Naive thymus-derived CD4-positive, alpha-beta T cell (primary cell): ENCODE measurements at regions of chr5 and their contacts with region 1.

Region 1: GRCh38 chr5:96963267-96963666 is 27.4 kb downstream of the LNPEP start:
- DNase-seq: no peak
- ATAC-seq: peak; percentile 39
- H3K4me3 ChIP-seq: peak overlapping the region; percentile 6
- H3K4me3 Mint-ChIP-seq: peak overlapping the region; percentile 71 to 88 (median 82)
- H3K27ac ChIP-seq: peak overlapping the region; percentile 71
- H3K27ac Mint-ChIP-seq: peak overlapping the region; percentile 84 to 98 (median 95)
- H3K4me1 ChIP-seq: peaks cover 29 to 52% of the 10 kb centered on the region in 2 donors
- H3K4me1 Mint-ChIP-seq: peaks cover 31 to 96% (median 90%) of the 10 kb centered on the region in 7 donors
- H3K27me3 ChIP-seq: no peaks in the 10 kb centered on the region
- H3K27me3 Mint-ChIP-seq: no peaks in the 10 kb centered on the region

Region 2: DNA sequence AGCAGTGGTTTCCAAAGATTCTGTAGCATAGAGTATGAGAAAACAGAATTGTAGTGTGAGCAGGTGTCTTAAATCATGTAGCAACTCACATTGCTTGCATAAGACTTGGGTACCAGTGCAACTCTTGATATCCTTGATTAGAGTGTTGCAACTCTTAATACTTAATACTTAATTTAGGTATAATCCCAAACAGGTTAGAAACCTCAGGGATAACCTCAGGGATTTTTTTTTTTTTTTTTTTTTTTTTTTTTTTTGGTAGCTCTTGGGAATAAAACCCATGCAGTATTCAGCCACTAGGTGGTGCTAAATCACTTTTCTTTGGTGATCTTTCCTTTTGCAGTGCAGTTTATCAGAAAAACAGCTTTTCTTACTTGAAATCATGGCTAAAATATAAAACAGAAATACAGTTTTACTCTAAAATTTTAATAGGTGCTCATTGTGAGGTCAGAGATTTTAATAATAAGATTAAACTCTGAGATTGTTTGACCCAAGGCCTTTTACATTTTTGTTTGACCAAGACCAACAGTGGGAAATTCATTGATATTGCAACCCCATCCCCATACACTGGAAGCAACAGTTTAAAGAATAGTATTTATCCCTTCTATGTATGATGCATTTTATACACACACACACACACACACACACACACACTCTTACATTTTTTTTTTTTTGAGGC is 210.8 kb before region 1 on chr5:
- CTCF ChIA-PET with region 1: no interaction called
- POLR2A ChIA-PET with region 1: no interaction called
- intact Hi-C with region 1: no loop called
- DNase-seq: peak in 7 of 9 donors; percentile 46 to 72 (median 60)
- ATAC-seq: peak; percentile 70
- H3K4me3 ChIP-seq: no peak overlapping the region
- H3K4me3 Mint-ChIP-seq: no peak overlapping the region
- H3K27ac ChIP-seq: no peak overlapping the region
- H3K27ac Mint-ChIP-seq: peak overlapping the region in 6 of 9 donors; percentile 36 to 67 (median 56)
- H3K4me1 ChIP-seq: no peaks in the 10 kb centered on the region
- H3K4me1 Mint-ChIP-seq: peaks cover 0 to 8% (median 0%) of the 10 kb centered on the region in 7 donors
- H3K27me3 ChIP-seq: no peaks in the 10 kb centered on the region
- H3K27me3 Mint-ChIP-seq: no peaks in the 10 kb centered on the region

Region 3: DNA sequence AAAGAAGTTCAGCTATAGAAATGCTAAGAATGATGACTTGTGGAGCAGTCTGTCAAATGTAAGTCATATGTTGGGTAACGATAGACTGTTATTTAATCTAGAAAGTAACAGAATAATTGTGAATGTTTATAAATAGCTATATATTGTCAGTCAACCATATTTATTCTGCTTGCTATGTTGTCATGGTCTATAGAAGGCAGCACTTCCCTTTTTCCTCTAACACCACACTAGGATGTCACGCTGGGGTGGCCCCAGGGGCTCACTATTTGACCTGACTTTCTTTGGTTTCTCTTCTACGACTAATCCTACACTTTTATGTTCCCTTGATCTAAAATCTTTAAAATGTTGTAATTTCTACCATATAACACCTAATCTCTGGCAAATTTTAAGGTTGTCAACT is 66.5 kb before region 1 on chr5:
- CTCF ChIA-PET with region 1: interaction called, 6 read pairs
- POLR2A ChIA-PET with region 1: interaction called, 3 read pairs
- intact Hi-C with region 1: loop called (anchors 2 kb)
- DNase-seq: no peak
- ATAC-seq: peak; percentile 73
- H3K4me3 ChIP-seq: peak overlapping the region; percentile 36
- H3K4me3 Mint-ChIP-seq: peak overlapping the region; percentile 67 to 88 (median 79)
- H3K27ac ChIP-seq: peak overlapping the region; percentile 69
- H3K27ac Mint-ChIP-seq: peak overlapping the region; percentile 83 to 98 (median 94)
- H3K4me1 ChIP-seq: peaks cover 6 to 17% of the 10 kb centered on the region in 2 donors
- H3K4me1 Mint-ChIP-seq: peaks cover 26 to 71% (median 68%) of the 10 kb centered on the region in 7 donors
- H3K27me3 ChIP-seq: no peaks in the 10 kb centered on the region
- H3K27me3 Mint-ChIP-seq: no peaks in the 10 kb centered on the region

Region 4: DNA sequence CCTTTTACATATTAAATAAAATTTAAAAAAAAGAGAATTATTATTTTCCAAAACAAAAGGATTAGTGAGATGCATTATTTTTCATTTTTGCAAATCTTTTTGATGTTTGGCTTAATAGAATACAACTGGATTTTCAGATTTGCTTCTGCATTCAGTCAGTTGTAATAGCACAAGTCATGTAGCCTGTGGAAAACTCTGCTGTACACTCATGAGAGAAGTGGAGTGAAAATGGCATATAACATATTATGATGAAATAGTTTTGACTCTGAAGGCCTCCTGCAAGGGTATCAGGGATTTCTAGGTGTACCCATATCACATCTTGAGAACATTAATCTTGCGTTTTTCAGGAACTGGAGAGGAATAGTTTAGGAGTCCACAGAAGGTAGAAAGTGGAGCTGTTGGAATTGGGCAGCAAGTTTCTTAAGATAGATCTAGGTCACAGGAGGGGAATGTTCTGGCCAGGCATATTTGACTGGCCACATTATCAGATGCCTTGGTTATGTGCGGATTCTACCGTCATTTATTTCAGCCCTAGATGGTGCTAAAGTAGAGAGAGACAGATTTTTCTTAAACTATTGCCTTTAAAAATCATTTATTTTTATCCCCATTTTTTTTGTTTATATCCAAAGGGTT is 11.0 kb before region 1 on chr5:
- CTCF ChIA-PET with region 1: interaction called, 5 read pairs
- POLR2A ChIA-PET with region 1: interaction called, 6 read pairs
- intact Hi-C with region 1: loop called (anchors 1 kb)
- DNase-seq: no peak
- ATAC-seq: no peak
- H3K4me3 ChIP-seq: no peak overlapping the region
- H3K4me3 Mint-ChIP-seq: peak overlapping the region in 6 of 10 donors; percentile 22 to 56 (median 40)
- H3K27ac ChIP-seq: no peak overlapping the region
- H3K27ac Mint-ChIP-seq: peak overlapping the region in 8 of 9 donors; percentile 72 to 91 (median 80)
- H3K4me1 ChIP-seq: peaks cover 29 to 39% of the 10 kb centered on the region in 2 donors
- H3K4me1 Mint-ChIP-seq: peaks cover 54 to 93% (median 83%) of the 10 kb centered on the region in 7 donors
- H3K27me3 ChIP-seq: no peaks in the 10 kb centered on the region
- H3K27me3 Mint-ChIP-seq: no peaks in the 10 kb centered on the region

Region 5: DNA sequence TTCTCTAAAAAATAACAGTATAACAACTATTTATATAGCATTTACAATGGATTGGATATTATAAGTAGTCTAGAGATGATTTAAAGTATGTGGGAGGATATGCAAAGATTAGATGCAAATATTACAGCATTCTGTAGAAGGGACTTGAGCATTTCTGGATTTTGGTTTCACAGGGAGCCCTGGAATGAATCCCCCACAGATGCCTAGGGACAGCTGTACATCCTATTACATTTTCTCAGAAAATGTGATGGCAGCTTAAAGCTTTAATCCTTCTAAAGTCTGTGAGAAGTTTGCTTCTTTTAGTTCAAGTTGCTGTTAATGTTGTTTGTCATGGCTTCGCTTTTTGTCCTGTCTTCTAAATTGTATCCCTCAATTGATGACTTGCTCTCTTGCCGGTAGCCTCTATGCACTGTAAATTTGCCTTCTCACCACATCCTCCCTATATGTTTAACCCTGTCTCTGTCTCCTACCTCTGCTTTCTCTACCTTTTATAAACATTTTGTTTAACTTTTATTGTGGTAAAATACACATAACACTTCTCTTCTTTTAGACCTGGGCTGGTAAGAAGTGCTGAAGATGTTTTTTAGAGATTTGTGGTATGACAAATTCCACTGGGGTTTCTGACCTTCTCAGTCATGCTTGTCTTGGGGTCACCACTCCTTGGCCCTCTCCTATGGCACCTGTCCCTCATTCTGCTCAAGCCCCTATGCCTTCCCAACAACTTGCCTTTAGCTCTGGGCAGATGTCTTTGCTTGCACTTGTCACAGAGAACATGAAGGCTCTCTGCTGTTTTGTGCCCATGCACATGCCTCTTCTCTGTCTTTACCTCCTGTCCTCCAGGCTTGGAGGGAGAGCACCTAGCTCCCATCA is 10.5 kb after region 1 on chr5:
- CTCF ChIA-PET with region 1: interaction called, 3 read pairs
- POLR2A ChIA-PET with region 1: interaction called, 15 read pairs
- intact Hi-C with region 1: loop called (anchors 1 kb)
- DNase-seq: peak in 4 of 9 donors; percentile 27 to 43 (median 40)
- ATAC-seq: peak; percentile 75
- H3K4me3 ChIP-seq: peak overlapping the region; percentile 21
- H3K4me3 Mint-ChIP-seq: peak overlapping the region; percentile 32 to 84 (median 74)
- H3K27ac ChIP-seq: no peak overlapping the region
- H3K27ac Mint-ChIP-seq: peak overlapping the region in 8 of 9 donors; percentile 21 to 79 (median 42)
- H3K4me1 ChIP-seq: peaks cover 44 to 59% of the 10 kb centered on the region in 2 donors
- H3K4me1 Mint-ChIP-seq: peaks cover 56 to 99% (median 89%) of the 10 kb centered on the region in 7 donors
- H3K27me3 ChIP-seq: no peaks in the 10 kb centered on the region
- H3K27me3 Mint-ChIP-seq: no peaks in the 10 kb centered on the region

Region 6: GRCh38 chr5:96997265-96997859 is 34.1 kb after region 1 on chr5:
- CTCF ChIA-PET with region 1: no interaction called
- POLR2A ChIA-PET with region 1: interaction called, 3 read pairs
- intact Hi-C with region 1: loop called in 1 of 2 experiments (anchors 5 kb)
- DNase-seq: peak in 5 of 9 donors; percentile 13 to 49 (median 21)
- ATAC-seq: peak; percentile 81
- H3K4me3 ChIP-seq: no peak overlapping the region
- H3K4me3 Mint-ChIP-seq: no peak overlapping the region
- H3K27ac ChIP-seq: no peak overlapping the region
- H3K27ac Mint-ChIP-seq: peak overlapping the region in 5 of 9 donors; percentile 13 to 75 (median 53)
- H3K4me1 ChIP-seq: no peaks in the 10 kb centered on the region
- H3K4me1 Mint-ChIP-seq: peaks cover 12 to 49% (median 33%) of the 10 kb centered on the region in 7 donors
- H3K27me3 ChIP-seq: no peaks in the 10 kb centered on the region
- H3K27me3 Mint-ChIP-seq: no peaks in the 10 kb centered on the region

Region 7: GRCh38 chr5:97094579-97095317 is 131.5 kb after region 1 on chr5:
- CTCF ChIA-PET with region 1: no interaction called
- POLR2A ChIA-PET with region 1: no interaction called
- intact Hi-C with region 1: loop called in 1 of 2 experiments (anchors 2 kb)
- DNase-seq: peak in 1 of 9 donors; percentile 28
- ATAC-seq: no peak
- H3K4me3 ChIP-seq: no peak overlapping the region
- H3K4me3 Mint-ChIP-seq: peak overlapping the region in 1 of 10 donors; percentile 62
- H3K27ac ChIP-seq: no peak overlapping the region
- H3K27ac Mint-ChIP-seq: peak overlapping the region in 1 of 9 donors; percentile 63
- H3K4me1 ChIP-seq: no peaks in the 10 kb centered on the region
- H3K4me1 Mint-ChIP-seq: peaks cover 0 to 20% (median 5%) of the 10 kb centered on the region in 7 donors
- H3K27me3 ChIP-seq: no peaks in the 10 kb centered on the region
- H3K27me3 Mint-ChIP-seq: peaks cover 0 to 43% (median 1%) of the 10 kb centered on the region in 5 donors